ENCODE measurements at regions of chr1 and their contacts with region 1.

Region 1: DNA sequence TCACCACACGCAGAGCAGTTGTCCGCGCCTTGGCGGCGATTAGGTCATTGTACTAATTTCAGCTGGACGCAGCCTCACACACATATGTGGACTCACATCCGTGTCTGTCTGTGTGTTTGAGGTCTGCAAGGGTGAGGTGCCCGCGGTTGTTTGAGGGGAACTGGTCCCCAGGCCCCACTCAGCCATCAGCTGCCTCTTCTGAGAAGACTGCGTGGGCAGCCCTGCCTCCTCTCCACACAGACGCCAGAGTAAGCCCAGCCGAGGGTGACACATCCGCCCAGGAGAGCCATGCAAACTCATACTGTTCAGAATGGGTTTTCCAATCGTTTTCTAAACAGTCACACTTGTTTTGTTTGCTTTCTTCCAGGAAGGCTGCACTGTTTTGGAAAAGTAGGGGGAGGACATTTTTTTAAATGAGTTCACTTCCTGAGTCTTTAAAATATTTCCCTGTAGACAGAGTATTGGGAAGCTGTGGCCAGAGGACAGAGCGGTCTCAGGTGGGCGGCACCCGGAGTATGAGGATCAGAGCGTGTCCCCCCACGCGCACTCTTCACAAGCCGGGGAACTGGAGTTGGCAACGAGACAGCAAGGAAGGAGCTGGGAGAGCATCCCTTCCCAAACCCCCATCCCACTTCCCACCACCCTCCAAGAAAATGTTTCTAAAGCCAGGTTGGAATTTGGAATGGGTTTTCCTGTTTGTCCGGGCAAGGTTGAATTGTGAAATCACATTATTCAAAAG is 53.3 kb downstream of the TOMM20 start:
- DNase-seq: peak in 8 of 9 experiments; percentile 22 to 61 (median 48)
- ATAC-seq: peak; percentile 60
- H3K4me3 ChIP-seq: peak overlapping the region in 1 of 2 experiments; percentile 22
- H3K4me3 Mint-ChIP-seq: peak overlapping the region; percentile 63
- H3K27ac ChIP-seq: no peak overlapping the region
- H3K27ac Mint-ChIP-seq: peak overlapping the region; percentile 57
- H3K4me1 ChIP-seq: no peaks in the 10 kb centered on the region
- H3K4me1 Mint-ChIP-seq: peaks cover 15% of the 10 kb centered on the region
- H3K27me3 ChIP-seq: peaks cover 0 to 4% of the 10 kb centered on the region in 2 experiments
- H3K27me3 Mint-ChIP-seq: no peaks in the 10 kb centered on the region
- CTCF ChIP-seq: no peak

Region 2: DNA sequence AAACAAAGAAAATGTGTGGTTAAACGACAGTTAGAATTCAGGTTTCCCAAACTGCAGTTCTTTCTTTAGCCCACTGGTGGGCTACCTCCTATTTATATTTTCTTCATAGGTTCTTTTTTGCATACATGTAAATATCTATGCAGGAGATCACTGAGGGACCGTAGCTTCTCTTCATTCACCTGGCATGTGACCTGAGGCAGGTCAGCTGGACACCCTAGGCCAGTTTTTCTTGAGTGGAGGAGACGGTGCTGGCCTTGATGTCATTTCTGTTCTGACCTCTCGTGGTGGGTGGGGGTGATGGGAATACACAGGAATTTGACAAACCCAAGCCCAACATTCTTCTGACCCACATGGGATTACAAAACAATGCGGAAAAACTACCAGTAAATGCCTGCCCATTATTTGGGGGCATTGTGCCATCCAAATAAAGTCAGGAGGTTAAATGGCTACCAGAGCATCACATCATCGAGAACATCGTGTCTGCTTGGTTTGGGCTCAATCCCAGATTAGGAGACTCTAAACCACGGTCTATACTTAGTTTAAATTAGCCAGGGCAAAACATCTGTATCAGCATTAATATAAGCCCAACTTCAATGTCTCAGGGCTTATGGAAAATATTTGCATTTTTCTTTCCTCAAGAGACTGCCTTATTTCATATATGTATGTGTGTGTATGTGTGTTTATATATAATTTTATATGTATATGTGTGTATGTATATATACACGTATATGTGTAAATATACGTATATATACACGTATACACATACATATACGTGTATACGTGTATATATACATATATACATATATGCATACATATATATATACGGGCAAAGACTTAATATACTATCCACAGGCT is 458.0 kb before region 1 on chr1:
- CTCF ChIA-PET with region 1: no interaction called
- POLR2A ChIA-PET with region 1: no interaction called
- intact Hi-C with region 1: loop called in 1 of 2 experiments (anchors 5 kb)
- DNase-seq: no peak
- ATAC-seq: no peak
- H3K4me3 ChIP-seq: no peak overlapping the region
- H3K4me3 Mint-ChIP-seq: no peak overlapping the region
- H3K27ac ChIP-seq: no peak overlapping the region
- H3K27ac Mint-ChIP-seq: no peak overlapping the region
- H3K4me1 ChIP-seq: peaks cover 19% of the 10 kb centered on the region
- H3K4me1 Mint-ChIP-seq: peaks cover 22% of the 10 kb centered on the region
- H3K27me3 ChIP-seq: no peaks in the 10 kb centered on the region
- H3K27me3 Mint-ChIP-seq: no peaks in the 10 kb centered on the region
- CTCF ChIP-seq: peak; percentile 3

Region 3: DNA sequence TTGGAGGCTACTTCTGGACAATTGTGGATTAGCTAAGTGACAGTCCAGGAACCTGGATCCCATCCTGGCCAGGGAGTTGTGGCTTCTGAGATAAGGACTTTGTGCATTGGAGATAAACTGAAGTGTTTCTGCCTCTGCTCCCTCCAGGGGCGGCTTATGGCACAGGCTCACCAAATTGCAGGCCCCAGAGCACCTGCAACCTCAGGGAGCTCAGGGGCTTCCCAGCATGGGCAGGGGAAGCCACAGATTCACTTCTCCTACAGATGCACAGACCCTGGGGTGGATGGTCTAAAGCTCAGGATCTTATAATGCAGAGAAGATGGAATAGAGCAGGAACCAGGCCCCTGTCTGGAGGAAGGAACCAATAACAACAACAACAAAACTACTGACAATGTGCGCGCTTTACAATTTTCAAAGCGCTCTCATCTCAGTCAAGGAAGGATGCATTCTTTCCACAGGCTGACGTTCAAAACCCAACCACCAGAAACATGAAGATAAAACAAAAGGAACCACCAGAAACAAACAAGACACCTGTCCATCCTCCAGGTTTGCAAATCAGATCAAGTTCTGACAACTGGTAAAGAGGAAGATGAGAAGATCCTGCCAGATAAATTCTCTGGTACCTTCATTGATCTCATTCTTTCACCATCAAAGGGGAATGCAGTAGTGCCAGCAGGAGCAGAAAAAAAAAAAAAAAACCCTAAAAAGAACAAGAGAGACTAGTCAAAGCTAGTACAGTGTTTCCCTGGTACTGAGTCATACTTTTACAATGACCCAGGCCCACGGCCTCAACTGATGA is 344.4 kb before region 1 on chr1:
- CTCF ChIA-PET with region 1: no interaction called
- POLR2A ChIA-PET with region 1: no interaction called
- intact Hi-C with region 1: loop called in 1 of 2 experiments (anchors 10 kb)
- DNase-seq: peak in 7 of 9 experiments; percentile 4 to 81 (median 54)
- ATAC-seq: peak; percentile 77
- H3K4me3 ChIP-seq: no peak overlapping the region
- H3K4me3 Mint-ChIP-seq: peak overlapping the region; percentile 8
- H3K27ac ChIP-seq: peak overlapping the region in 1 of 2 experiments; percentile 43
- H3K27ac Mint-ChIP-seq: peak overlapping the region; percentile 72
- H3K4me1 ChIP-seq: peaks cover 37% of the 10 kb centered on the region
- H3K4me1 Mint-ChIP-seq: peaks cover 45% of the 10 kb centered on the region
- H3K27me3 ChIP-seq: no peaks in the 10 kb centered on the region
- H3K27me3 Mint-ChIP-seq: no peaks in the 10 kb centered on the region
- CTCF ChIP-seq: no peak

Region 4: GRCh38 chr1:234925440-234926263 is 149.7 kb before region 1 on chr1:
- CTCF ChIA-PET with region 1: no interaction called
- POLR2A ChIA-PET with region 1: no interaction called
- intact Hi-C with region 1: loop called in 1 of 2 experiments (anchors 10 kb)
- DNase-seq: peak in 3 of 9 experiments; percentile 47 to 70 (median 56)
- ATAC-seq: peak; percentile 60
- H3K4me3 ChIP-seq: peak overlapping the region in 1 of 2 experiments; percentile 36
- H3K4me3 Mint-ChIP-seq: peak overlapping the region; percentile 70
- H3K27ac ChIP-seq: peak overlapping the region in 1 of 2 experiments; percentile 38
- H3K27ac Mint-ChIP-seq: peak overlapping the region; percentile 74
- H3K4me1 ChIP-seq: peaks cover 44% of the 10 kb centered on the region
- H3K4me1 Mint-ChIP-seq: peaks cover 45% of the 10 kb centered on the region
- H3K27me3 ChIP-seq: no peaks in the 10 kb centered on the region
- H3K27me3 Mint-ChIP-seq: no peaks in the 10 kb centered on the region
- CTCF ChIP-seq: no peak

Region 5: DNA sequence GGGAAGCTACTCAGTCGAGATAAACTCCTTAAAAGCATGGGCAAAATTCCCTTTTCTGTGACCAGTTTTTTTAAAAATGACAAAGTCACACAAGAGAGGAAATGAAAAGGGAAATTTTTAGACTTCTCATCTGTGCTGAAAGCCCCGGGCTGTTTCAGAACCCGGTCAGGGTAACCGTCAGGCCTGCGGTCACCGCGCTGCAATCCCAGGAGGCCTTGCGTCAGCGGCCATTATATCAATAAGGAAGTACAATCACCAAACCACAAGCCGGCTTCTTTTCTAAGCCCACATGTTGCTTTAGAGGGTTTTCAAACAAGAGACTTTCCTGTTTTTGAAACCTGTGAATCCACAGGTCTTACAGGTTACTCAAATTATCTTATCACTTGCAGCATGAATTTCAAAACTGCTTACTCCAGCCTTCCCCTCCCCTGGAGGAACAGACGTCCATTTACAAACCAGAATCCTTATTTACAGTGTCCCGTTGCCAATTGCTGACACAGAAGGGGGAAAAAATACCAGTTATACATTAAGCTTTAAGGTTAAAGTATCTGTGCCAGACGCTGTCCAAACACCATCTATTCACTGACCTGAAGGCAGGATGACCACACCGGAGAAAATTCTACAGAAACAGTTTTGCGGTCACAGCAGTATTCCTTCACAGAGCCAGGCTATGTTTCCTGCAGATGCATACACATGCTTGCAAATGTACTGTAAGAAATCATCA is 112.0 kb before region 1 on chr1:
- CTCF ChIA-PET with region 1: no interaction called
- POLR2A ChIA-PET with region 1: no interaction called
- intact Hi-C with region 1: loop called in 1 of 2 experiments (anchors 5 kb)
- DNase-seq: peak; percentile 58 to 97 (median 86)
- ATAC-seq: peak; percentile 85
- H3K4me3 ChIP-seq: peak overlapping the region in 1 of 2 experiments; percentile 16
- H3K4me3 Mint-ChIP-seq: peak overlapping the region; percentile 64
- H3K27ac ChIP-seq: peak overlapping the region; percentile 31 to 81
- H3K27ac Mint-ChIP-seq: peak overlapping the region; percentile 90
- H3K4me1 ChIP-seq: peaks cover 58% of the 10 kb centered on the region
- H3K4me1 Mint-ChIP-seq: peaks cover 62% of the 10 kb centered on the region
- H3K27me3 ChIP-seq: no peaks in the 10 kb centered on the region
- H3K27me3 Mint-ChIP-seq: no peaks in the 10 kb centered on the region
- CTCF ChIP-seq: no peak

Region 6: DNA sequence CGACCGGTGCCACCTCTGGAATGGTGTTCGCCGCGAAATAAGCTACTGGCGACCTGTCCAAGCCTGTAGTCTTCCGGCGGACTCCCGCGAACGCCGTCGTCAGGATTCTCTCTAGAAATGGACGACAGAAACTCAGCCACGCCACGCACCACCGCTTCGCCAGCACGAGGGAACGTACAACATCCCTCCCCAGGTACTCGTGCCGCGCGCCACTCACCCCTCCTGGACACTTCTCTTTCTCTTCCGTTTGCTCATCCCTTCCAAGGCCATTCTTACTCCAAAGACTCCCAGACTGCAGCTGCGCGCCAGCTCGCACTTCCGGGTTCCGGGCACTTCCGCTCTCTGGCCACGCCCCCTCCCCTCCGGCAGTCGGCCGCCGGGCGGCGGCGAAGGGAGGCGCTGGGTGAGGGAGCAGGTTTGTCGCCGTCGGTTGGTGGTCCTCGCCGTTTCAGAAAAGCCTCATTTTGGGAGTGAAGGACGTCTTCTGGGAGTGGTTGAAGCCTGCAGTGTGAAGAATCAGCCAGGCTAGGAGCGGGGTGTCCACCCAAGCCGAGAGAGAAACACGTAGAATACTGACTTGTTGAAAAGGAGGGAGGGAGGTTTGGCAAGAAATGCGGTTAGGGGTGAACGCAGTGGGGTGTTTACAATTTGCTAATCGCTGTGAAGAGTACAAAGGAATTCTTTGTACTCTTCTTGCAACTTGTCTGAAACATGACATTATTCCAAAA is 85.8 kb after region 1 on chr1 and contains the start of gene RBM34:
- CTCF ChIA-PET with region 1: no interaction called
- POLR2A ChIA-PET with region 1: no interaction called
- intact Hi-C with region 1: no loop called
- DNase-seq: peak; percentile 83 to 96 (median 93)
- ATAC-seq: peak; percentile 87
- H3K4me3 ChIP-seq: peak within 1 kb of the TSS; percentile 89 to 91
- H3K4me3 Mint-ChIP-seq: peak within 1 kb of the TSS; percentile 99
- H3K27ac ChIP-seq: peak within 1 kb of the TSS; percentile 91 to 93
- H3K27ac Mint-ChIP-seq: peak within 1 kb of the TSS; percentile 100
- H3K4me1 ChIP-seq: peaks cover 40% of the 10 kb centered on the region
- H3K4me1 Mint-ChIP-seq: peaks cover 18% of the 10 kb centered on the region
- H3K27me3 ChIP-seq: no peaks in the 10 kb centered on the region
- H3K27me3 Mint-ChIP-seq: no peaks in the 10 kb centered on the region
- CTCF ChIP-seq: no peak
- total RNA-seq, gene RBM34: 243 to 267 TPM

Region 7: GRCh38 chr1:235648954-235649367 is 573.6 kb after region 1 on chr1:
- CTCF ChIA-PET with region 1: no interaction called
- POLR2A ChIA-PET with region 1: no interaction called
- intact Hi-C with region 1: no loop called
- DNase-seq: peak; percentile 20 to 86 (median 61)
- ATAC-seq: peak; percentile 74
- H3K4me3 ChIP-seq: peak overlapping the region; percentile 24 to 35
- H3K4me3 Mint-ChIP-seq: peak overlapping the region; percentile 85
- H3K27ac ChIP-seq: no peak overlapping the region
- H3K27ac Mint-ChIP-seq: peak overlapping the region; percentile 83
- H3K4me1 ChIP-seq: peaks cover 19% of the 10 kb centered on the region
- H3K4me1 Mint-ChIP-seq: peaks cover 13% of the 10 kb centered on the region
- H3K27me3 ChIP-seq: peaks cover 10 to 25% of the 10 kb centered on the region in 2 experiments
- H3K27me3 Mint-ChIP-seq: peaks cover 58% of the 10 kb centered on the region
- CTCF ChIP-seq: no peak